ENCODE measurements at regions of chr4 and their contacts with region 1.

Region 1: GRCh38 chr4:10605746-10606482 is 78.7 kb downstream of the CLNK start:
- DNase-seq: peak; percentile 42
- H3K4me3 ChIP-seq: no peak overlapping the region
- H3K27ac ChIP-seq: peak overlapping the region; percentile 54
- H3K27me3 ChIP-seq: no peaks in the 10 kb centered on the region
- CTCF ChIP-seq: no peak

Region 2: GRCh38 chr4:10273030-10273429 is 332.9 kb before region 1 on chr4:
- CTCF ChIA-PET with region 1: no interaction called
- POLR2A ChIA-PET with region 1: no interaction called
- DNase-seq: no peak
- H3K4me3 ChIP-seq: no peak overlapping the region
- H3K27ac ChIP-seq: no peak overlapping the region
- H3K27me3 ChIP-seq: no peaks in the 10 kb centered on the region
- CTCF ChIP-seq: no peak

Region 3: GRCh38 chr4:10783351-10783750 is 177.4 kb after region 1 on chr4:
- CTCF ChIA-PET with region 1: interaction called, 10 read pairs
- POLR2A ChIA-PET with region 1: no interaction called
- DNase-seq: peak; percentile 59
- H3K4me3 ChIP-seq: no peak overlapping the region
- H3K27ac ChIP-seq: peak overlapping the region; percentile 63
- H3K27me3 ChIP-seq: no peaks in the 10 kb centered on the region
- CTCF ChIP-seq: no peak

Measured in AG04450 (cell line).